ENCODE measurements at regions of chr12 and their contacts with region 1.

Region 1: GRCh38 chr12:95003213-95003920 is at the start of gene NDUFA12:
- DNase-seq: peak; percentile 89 to 97 (median 93)
- ATAC-seq: peak; percentile 98 to 100 (median 100)
- H3K4me3 ChIP-seq: peak within 1 kb of the TSS; percentile 89
- H3K4me3 Mint-ChIP-seq: peak within 1 kb of the TSS; percentile 87 to 95 (median 91)
- H3K27ac ChIP-seq: peak within 1 kb of the TSS; percentile 87
- H3K27ac Mint-ChIP-seq: peak within 1 kb of the TSS; percentile 93 to 94
- H3K4me1 ChIP-seq: peaks cover 26% of the 10 kb centered on the region in 2 experiments
- H3K4me1 Mint-ChIP-seq: peaks cover 59 to 67% (median 66%) of the 10 kb centered on the region in 3 donors
- H3K27me3 ChIP-seq: no peaks in the 10 kb centered on the region
- H3K27me3 Mint-ChIP-seq: no peaks in the 10 kb centered on the region
- total RNA-seq, gene NDUFA12: 56.2 to 120 (median 67.6) TPM

Region 2: DNA sequence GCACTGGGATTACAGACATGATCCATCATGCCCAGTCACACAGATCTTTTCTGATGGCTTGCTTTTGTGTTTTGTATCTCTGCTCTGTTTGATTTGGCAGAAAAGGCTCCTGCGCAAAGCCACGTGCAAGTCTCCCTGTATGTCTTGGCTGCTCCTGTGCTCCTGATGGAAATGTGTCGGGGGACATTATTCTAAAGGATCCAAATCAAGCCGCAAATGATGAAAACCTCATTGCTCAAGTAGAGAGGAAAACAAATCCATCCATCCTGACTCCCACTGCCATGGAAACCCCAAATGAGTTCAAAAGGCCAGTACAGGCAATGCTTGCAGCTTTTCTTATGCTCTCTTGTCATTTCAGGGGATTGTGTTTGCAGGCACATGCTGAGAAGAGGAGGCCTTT is 93.7 kb before region 1 on chr12:
- CTCF ChIA-PET with region 1: no interaction called
- POLR2A ChIA-PET with region 1: no interaction called
- DNase-seq: no peak
- ATAC-seq: no peak
- H3K4me3 ChIP-seq: no peak overlapping the region
- H3K4me3 Mint-ChIP-seq: no peak overlapping the region
- H3K27ac ChIP-seq: no peak overlapping the region
- H3K27ac Mint-ChIP-seq: no peak overlapping the region
- H3K4me1 ChIP-seq: no peaks in the 10 kb centered on the region
- H3K4me1 Mint-ChIP-seq: no peaks in the 10 kb centered on the region
- H3K27me3 ChIP-seq: no peaks in the 10 kb centered on the region
- H3K27me3 Mint-ChIP-seq: no peaks in the 10 kb centered on the region

Region 3: DNA sequence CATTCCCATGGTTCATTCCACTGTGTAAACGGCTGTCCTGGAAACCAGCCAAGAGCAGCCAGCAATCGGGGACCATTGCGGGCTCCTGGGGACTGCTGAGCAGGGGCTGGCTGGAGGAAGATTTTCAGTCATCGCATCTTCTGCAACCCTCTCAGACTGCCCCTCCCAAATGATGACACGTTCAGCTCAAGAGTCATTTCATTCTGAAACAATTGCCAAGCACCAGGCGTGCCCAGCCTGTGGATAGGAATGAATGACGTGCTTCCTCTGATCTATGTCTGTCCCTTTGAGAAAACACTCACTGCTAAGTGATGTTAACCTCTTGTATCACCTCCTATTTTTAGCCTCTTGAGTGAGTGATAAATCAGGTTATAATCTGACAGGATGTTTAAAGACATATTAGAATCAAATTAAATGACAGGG is 61.9 kb before region 1 on chr12:
- CTCF ChIA-PET with region 1: no interaction called
- POLR2A ChIA-PET with region 1: no interaction called
- DNase-seq: peak in 32 of 35 experiments; percentile 2 to 66 (median 32)
- ATAC-seq: peak in 2 of 4 experiments; percentile 41 to 82
- H3K4me3 ChIP-seq: no peak overlapping the region
- H3K4me3 Mint-ChIP-seq: no peak overlapping the region
- H3K27ac ChIP-seq: peak overlapping the region; percentile 41
- H3K27ac Mint-ChIP-seq: peak overlapping the region; percentile 20 to 50
- H3K4me1 ChIP-seq: peaks cover 6 to 46% of the 10 kb centered on the region in 2 experiments
- H3K4me1 Mint-ChIP-seq: peaks cover 38 to 48% (median 42%) of the 10 kb centered on the region in 3 donors
- H3K27me3 ChIP-seq: no peaks in the 10 kb centered on the region
- H3K27me3 Mint-ChIP-seq: no peaks in the 10 kb centered on the region

Region 4: GRCh38 chr12:94973221-94973620 is 30.1 kb before region 1 on chr12:
- CTCF ChIA-PET with region 1: no interaction called
- POLR2A ChIA-PET with region 1: no interaction called
- DNase-seq: no peak
- ATAC-seq: no peak
- H3K4me3 ChIP-seq: no peak overlapping the region
- H3K4me3 Mint-ChIP-seq: no peak overlapping the region
- H3K27ac ChIP-seq: no peak overlapping the region
- H3K27ac Mint-ChIP-seq: no peak overlapping the region
- H3K4me1 ChIP-seq: peaks cover 0 to 6% of the 10 kb centered on the region in 2 experiments
- H3K4me1 Mint-ChIP-seq: peaks cover 23 to 42% (median 24%) of the 10 kb centered on the region in 3 donors
- H3K27me3 ChIP-seq: no peaks in the 10 kb centered on the region
- H3K27me3 Mint-ChIP-seq: no peaks in the 10 kb centered on the region

Region 5: DNA sequence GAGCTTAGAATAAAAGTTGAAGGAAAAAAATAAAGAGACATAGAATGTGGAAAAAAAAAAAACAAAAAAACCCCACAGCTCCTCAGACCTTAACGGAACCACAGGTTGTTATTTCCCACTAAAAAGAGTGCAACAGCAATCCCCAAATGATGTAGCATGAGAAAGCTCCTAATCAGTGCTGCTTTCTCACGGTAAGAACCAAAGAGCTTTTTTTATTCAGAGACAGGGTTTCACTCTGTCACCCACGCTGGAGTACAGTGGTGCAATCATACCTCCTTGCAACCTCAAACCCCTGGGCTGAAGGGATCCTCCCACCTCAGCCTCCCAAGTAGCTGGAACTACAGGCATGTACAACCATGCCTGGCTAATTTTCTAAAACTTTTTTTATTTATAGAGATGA is 13.1 kb before region 1 on chr12:
- CTCF ChIA-PET with region 1: interaction called, 3 to 4 read pairs
- POLR2A ChIA-PET with region 1: interaction called in 1 of 2 experiments, 19 read pairs
- DNase-seq: peak in 1 of 35 experiments; percentile 27
- ATAC-seq: peak in 1 of 4 experiments; percentile 45
- H3K4me3 ChIP-seq: no peak overlapping the region
- H3K4me3 Mint-ChIP-seq: peak overlapping the region in 2 of 3 donors; percentile 9 to 58
- H3K27ac ChIP-seq: peak overlapping the region; percentile 81
- H3K27ac Mint-ChIP-seq: peak overlapping the region; percentile 94 to 95
- H3K4me1 ChIP-seq: peaks cover 31 to 44% of the 10 kb centered on the region in 2 experiments
- H3K4me1 Mint-ChIP-seq: peaks cover 56 to 61% (median 59%) of the 10 kb centered on the region in 3 donors
- H3K27me3 ChIP-seq: no peaks in the 10 kb centered on the region
- H3K27me3 Mint-ChIP-seq: no peaks in the 10 kb centered on the region

Region 6: GRCh38 chr12:95870897-95871296 is 867.5 kb after region 1 on chr12:
- CTCF ChIA-PET with region 1: no interaction called
- POLR2A ChIA-PET with region 1: interaction called in 1 of 2 experiments, 10 read pairs
- DNase-seq: no peak
- ATAC-seq: no peak
- H3K4me3 ChIP-seq: no peak overlapping the region
- H3K4me3 Mint-ChIP-seq: no peak overlapping the region
- H3K27ac ChIP-seq: no peak overlapping the region
- H3K27ac Mint-ChIP-seq: no peak overlapping the region
- H3K4me1 ChIP-seq: no peaks in the 10 kb centered on the region
- H3K4me1 Mint-ChIP-seq: peaks cover 0 to 4% (median 0%) of the 10 kb centered on the region in 3 donors
- H3K27me3 ChIP-seq: no peaks in the 10 kb centered on the region
- H3K27me3 Mint-ChIP-seq: no peaks in the 10 kb centered on the region